Natural killer cell (primary cell): ENCODE measurements at regions of chr13 and their contacts with region 1.

Region 1: DNA sequence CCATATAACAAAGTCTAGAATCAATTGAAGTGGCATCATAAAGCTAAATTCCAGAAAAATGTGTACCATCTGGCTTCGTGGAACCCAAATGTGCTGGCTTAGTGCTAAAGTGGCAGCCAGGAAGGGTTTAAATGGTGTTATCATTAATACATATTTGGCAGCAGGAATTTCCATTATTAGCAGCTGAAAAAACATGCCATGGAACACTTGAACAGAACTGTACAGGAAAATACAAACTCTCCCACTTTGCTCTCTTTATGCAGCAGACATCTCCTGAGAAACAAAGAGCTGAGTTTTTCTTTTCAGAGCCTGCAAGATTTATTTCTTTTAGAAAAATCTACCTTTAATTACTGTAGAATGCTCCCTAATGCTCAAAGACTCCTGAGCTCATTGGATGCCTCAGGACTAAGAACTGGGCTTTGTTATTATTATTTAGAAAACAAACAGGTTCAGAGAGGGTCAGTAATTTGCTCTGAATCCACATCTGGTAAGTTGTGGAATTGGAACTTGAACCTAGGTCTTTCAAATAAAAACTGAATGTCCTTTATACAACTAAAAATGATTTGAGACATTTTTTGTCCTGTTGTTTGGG is 179.0 kb downstream of the LACC1 start:
- DNase-seq: no peak
- ATAC-seq: no peak
- H3K4me3 ChIP-seq: no peak overlapping the region
- H3K4me3 Mint-ChIP-seq: no peak overlapping the region
- H3K27ac ChIP-seq: no peak overlapping the region
- H3K27ac Mint-ChIP-seq: no peak overlapping the region
- H3K4me1 ChIP-seq: peaks cover 3% of the 10 kb centered on the region
- H3K4me1 Mint-ChIP-seq: peaks cover 10 to 11% of the 10 kb centered on the region in 2 donors
- H3K27me3 ChIP-seq: no peaks in the 10 kb centered on the region
- H3K27me3 Mint-ChIP-seq: peaks cover 27 to 50% of the 10 kb centered on the region in 2 donors
- CTCF ChIP-seq: no peak

Region 2: DNA sequence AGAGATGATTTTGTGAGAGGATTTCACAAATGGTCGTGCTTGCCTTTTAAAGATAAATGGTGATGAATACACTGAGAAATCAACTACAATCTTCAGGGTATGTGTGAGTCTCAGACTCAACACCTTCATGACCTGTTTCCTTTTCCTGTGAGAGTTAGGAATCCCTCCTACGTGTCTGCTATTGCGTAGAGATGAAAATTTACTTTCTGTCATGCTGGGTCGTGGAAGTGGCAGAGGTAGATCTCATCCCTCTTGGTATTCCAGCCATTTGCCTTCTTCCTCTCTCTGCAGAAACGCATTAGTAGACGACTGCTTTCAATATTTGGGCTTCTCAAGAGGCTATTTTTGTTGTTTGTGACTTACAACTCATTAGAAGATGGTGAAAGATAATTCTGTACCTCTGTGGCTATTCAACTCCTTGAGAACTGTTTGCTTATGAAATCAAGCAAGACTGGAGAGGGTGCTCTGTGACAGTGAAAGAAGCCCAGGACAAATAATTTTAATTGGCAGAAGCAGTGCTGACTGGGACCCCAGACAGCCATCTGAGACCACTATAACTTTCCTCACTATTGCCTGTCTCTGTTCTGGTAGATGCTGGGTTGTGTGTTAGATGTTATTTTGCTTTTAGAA is 54.1 kb after region 1 on chr13:
- intact Hi-C with region 1: loop called (anchors 2 kb)
- DNase-seq: peak; percentile 19 to 62
- ATAC-seq: peak; percentile 81 to 85 (median 83)
- H3K4me3 ChIP-seq: no peak overlapping the region
- H3K4me3 Mint-ChIP-seq: peak overlapping the region; percentile 74
- H3K27ac ChIP-seq: peak overlapping the region; percentile 92
- H3K27ac Mint-ChIP-seq: peak overlapping the region; percentile 90 to 93
- H3K4me1 ChIP-seq: peaks cover 29% of the 10 kb centered on the region
- H3K4me1 Mint-ChIP-seq: peaks cover 45 to 48% of the 10 kb centered on the region in 2 donors
- H3K27me3 ChIP-seq: no peaks in the 10 kb centered on the region
- H3K27me3 Mint-ChIP-seq: no peaks in the 10 kb centered on the region
- CTCF ChIP-seq: no peak

Region 3: DNA sequence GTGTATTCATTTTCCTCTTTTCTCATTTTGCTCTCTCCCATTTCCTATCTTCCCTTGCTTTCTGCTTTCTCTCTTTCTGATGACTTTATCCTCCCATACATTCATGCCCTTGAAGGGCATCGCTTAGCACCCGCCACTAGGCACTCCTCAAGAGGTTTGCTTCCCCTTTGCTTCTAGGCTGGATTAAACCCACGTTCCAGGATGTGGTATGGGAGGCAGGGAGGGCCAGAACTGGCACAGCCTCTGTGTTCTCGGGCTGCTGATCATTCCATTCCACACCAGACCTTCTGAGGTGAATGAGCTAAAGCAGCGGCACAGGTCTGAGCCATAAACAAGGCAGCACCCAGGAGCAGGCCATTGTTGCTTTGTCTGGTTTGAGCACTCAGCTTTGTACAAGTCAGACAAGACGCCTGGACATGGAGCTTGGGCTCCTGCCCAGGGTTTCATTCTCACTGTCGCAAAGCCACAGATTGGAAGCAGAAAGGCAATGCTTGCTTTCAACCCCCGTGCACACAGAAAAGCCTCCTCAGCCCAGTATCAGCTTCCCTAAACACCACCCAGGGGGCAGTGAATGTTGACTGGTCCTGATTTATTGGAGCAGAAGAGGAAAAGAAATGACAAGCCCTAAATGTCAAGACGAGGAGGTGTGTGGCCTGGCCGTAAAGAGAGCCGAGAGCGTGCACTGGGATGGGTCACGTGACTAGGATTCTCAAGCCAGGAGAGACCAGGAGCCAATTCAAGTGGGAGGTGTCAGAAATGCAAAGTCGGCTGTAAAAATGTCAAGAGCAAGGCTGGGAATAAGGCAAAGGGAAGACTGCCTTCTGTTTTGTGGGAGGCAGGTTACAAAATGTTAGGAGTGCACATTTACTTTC is 96.9 kb after region 1 on chr13:
- intact Hi-C with region 1: no loop called
- DNase-seq: no peak
- ATAC-seq: no peak
- H3K4me3 ChIP-seq: no peak overlapping the region
- H3K4me3 Mint-ChIP-seq: no peak overlapping the region
- H3K27ac ChIP-seq: no peak overlapping the region
- H3K27ac Mint-ChIP-seq: no peak overlapping the region
- H3K4me1 ChIP-seq: no peaks in the 10 kb centered on the region
- H3K4me1 Mint-ChIP-seq: no peaks in the 10 kb centered on the region
- H3K27me3 ChIP-seq: no peaks in the 10 kb centered on the region
- H3K27me3 Mint-ChIP-seq: peaks cover 0 to 18% of the 10 kb centered on the region in 2 donors
- CTCF ChIP-seq: no peak